Mammary epithelial cell (primary cell): ENCODE measurements at regions of chr22 and their contacts with region 1.

Region 1: GRCh38 chr22:50576070-50576469 is 2.2 kb downstream of the CPT1B start:
- DNase-seq: peak; percentile 46
- H3K4me3 ChIP-seq: no peak overlapping the region
- H3K27ac ChIP-seq: no peak overlapping the region
- H3K4me1 ChIP-seq: no peaks in the 10 kb centered on the region
- H3K27me3 ChIP-seq: no peaks in the 10 kb centered on the region
- CTCF ChIP-seq: peak; percentile 32 to 48

Region 2: GRCh38 chr22:50185384-50186087 is 390.5 kb before region 1 on chr22 and contains the start of gene TRABD:
- CTCF ChIA-PET with region 1: no interaction called
- dilution Hi-C with region 1: loop called (anchors 10 kb)
- in situ Hi-C with region 1: no loop called
- intact Hi-C with region 1: no loop called
- DNase-seq: peak; percentile 81
- H3K4me3 ChIP-seq: peak within 1 kb of the TSS; percentile 75 to 98 (median 75)
- H3K27ac ChIP-seq: peak within 1 kb of the TSS; percentile 40
- H3K4me1 ChIP-seq: peaks cover 38% of the 10 kb centered on the region
- H3K27me3 ChIP-seq: no peaks in the 10 kb centered on the region
- CTCF ChIP-seq: no peak
- total RNA-seq, gene TRABD: 25.8 to 63.5 TPM

Region 3: GRCh38 chr22:50423042-50423815 is 152.8 kb before region 1 on chr22:
- CTCF ChIA-PET with region 1: no interaction called
- dilution Hi-C with region 1: loop called (anchors 5 kb)
- in situ Hi-C with region 1: no loop called
- intact Hi-C with region 1: no loop called
- DNase-seq: no peak
- H3K4me3 ChIP-seq: no peak overlapping the region
- H3K27ac ChIP-seq: no peak overlapping the region
- H3K4me1 ChIP-seq: no peaks in the 10 kb centered on the region
- H3K27me3 ChIP-seq: no peaks in the 10 kb centered on the region
- CTCF ChIP-seq: no peak

Region 4: GRCh38 chr22:50490531-50491308 is 85.3 kb before region 1 on chr22:
- CTCF ChIA-PET with region 1: no interaction called
- dilution Hi-C with region 1: loop called (anchors 5 kb)
- in situ Hi-C with region 1: no loop called
- intact Hi-C with region 1: no loop called
- DNase-seq: no peak
- H3K4me3 ChIP-seq: no peak overlapping the region
- H3K27ac ChIP-seq: no peak overlapping the region
- H3K4me1 ChIP-seq: no peaks in the 10 kb centered on the region
- H3K27me3 ChIP-seq: no peaks in the 10 kb centered on the region
- CTCF ChIP-seq: no peak

Region 5: GRCh38 chr22:50525390-50526068 is 50.5 kb before region 1 on chr22 and contains the start of gene SCO2:
- CTCF ChIA-PET with region 1: no interaction called
- dilution Hi-C with region 1: no loop called
- in situ Hi-C with region 1: loop called in 1 of 2 experiments (anchors 10 kb)
- intact Hi-C with region 1: no loop called
- DNase-seq: peak; percentile 97
- H3K4me3 ChIP-seq: peak within 1 kb of the TSS; percentile 64 to 95 (median 86)
- H3K27ac ChIP-seq: peak within 1 kb of the TSS; percentile 39
- H3K4me1 ChIP-seq: peaks cover 27% of the 10 kb centered on the region
- H3K27me3 ChIP-seq: no peaks in the 10 kb centered on the region
- CTCF ChIP-seq: peak; percentile 18 to 60
- total RNA-seq, gene SCO2: 2.8 to 6.6 TPM

Region 6: GRCh38 chr22:50627642-50628542 is 51.8 kb after region 1 on chr22 and contains the start of gene ARSA:
- CTCF ChIA-PET with region 1: no interaction called
- dilution Hi-C with region 1: loop called (anchors 5 kb)
- in situ Hi-C with region 1: no loop called
- intact Hi-C with region 1: no loop called
- DNase-seq: peak; percentile 76
- H3K4me3 ChIP-seq: peak within 1 kb of the TSS; percentile 88 to 98 (median 91)
- H3K27ac ChIP-seq: peak within 1 kb of the TSS; percentile 14
- H3K4me1 ChIP-seq: peaks cover 23% of the 10 kb centered on the region
- H3K27me3 ChIP-seq: no peaks in the 10 kb centered on the region
- CTCF ChIP-seq: peak in 1 of 2 donors; percentile 64
- total RNA-seq, gene ARSA: 32.7 to 50.4 TPM

Region 7: DNA sequence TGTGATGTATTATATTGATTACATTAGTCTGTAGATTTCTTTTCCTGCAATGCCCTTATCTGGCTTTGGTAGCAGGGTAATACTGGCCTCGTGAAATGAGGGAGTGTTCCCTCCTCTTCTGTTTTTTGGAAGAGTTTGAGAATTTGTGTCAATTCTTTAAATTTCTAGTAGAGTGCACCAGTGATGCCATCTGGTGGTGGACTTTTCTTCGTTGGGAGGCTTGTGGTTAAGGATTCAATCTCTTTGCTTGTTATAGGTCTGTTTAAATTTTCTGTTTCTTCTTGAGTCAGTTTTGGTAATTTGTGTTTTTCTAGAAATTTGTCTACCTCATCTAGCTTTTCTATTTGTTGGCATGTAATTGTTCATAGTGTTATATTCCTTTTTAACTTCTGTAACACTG is 115.5 kb after region 1 on chr22:
- CTCF ChIA-PET with region 1: no interaction called
- dilution Hi-C with region 1: no loop called
- in situ Hi-C with region 1: no loop called
- intact Hi-C with region 1: loop called (anchors 1 kb)
- DNase-seq: peak; percentile 28
- H3K4me3 ChIP-seq: no peak overlapping the region
- H3K27ac ChIP-seq: no peak overlapping the region
- H3K4me1 ChIP-seq: peaks cover 14% of the 10 kb centered on the region
- H3K27me3 ChIP-seq: no peaks in the 10 kb centered on the region
- CTCF ChIP-seq: peak; percentile 63 to 72